BJ (cell line): ENCODE measurements at regions of chr5 and their contacts with region 1.

Region 1: DNA sequence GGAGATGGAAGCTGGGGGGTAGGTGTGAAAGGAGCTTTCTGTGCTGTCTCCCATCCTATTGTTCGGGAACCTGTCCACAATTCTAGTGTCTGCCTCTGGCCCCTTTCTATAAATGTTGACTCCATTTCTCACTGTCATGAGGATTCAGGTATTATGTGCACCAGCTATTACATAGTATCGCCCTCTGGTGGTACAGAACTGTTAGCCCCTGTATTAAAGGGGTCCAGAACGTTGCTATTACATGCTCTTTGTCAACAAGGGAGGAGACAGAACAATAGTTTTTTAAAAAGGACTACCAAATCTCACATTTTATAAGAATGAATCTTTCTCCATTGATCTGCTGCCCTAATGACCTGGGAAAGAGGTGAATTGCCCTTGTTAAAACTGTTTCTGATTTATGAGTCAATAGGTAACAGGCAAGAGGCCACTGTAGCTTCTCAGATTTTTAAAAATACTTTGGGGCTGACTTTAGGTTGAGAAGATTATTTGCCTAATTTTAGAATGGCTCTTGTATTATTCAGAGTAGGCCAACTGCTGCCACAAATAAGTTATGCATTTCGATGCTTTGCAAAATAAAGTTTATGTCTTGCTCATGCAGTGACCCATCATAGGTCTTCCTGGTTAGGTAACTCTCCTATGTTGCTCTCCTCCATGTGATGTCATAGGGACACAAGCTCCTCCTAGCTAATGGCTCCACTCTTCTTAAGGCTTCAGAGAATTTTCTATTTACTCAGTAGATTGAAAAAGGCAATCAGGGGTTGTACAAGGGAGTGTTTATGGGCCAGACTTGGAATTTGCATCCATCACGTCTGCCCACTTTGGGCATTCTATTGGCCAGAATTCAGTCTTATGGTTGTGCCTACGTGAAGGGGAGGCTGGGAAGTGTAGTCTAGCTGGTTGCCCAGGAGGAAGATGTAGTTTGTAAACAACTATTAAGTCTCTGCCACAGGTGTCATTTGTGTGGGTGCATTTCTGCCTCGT is 20.8 kb downstream of the DCANP1 start:
- DNase-seq: no peak
- H3K4me3 ChIP-seq: no peak overlapping the region
- H3K27me3 ChIP-seq: no peaks in the 10 kb centered on the region
- CTCF ChIP-seq: peak; percentile 86

Region 2: GRCh38 chr5:134833340-134834032 is 592.9 kb before region 1 on chr5:
- CTCF ChIA-PET with region 1: no interaction called
- POLR2A ChIA-PET with region 1: no interaction called
- DNase-seq: no peak
- H3K4me3 ChIP-seq: no peak overlapping the region
- H3K27me3 ChIP-seq: no peaks in the 10 kb centered on the region
- CTCF ChIP-seq: no peak

Region 3: GRCh38 chr5:135332519-135333150 is 93.8 kb before region 1 on chr5:
- CTCF ChIA-PET with region 1: interaction called, 13 read pairs
- POLR2A ChIA-PET with region 1: no interaction called
- DNase-seq: no peak
- H3K4me3 ChIP-seq: no peak overlapping the region
- H3K27me3 ChIP-seq: no peaks in the 10 kb centered on the region
- CTCF ChIP-seq: peak; percentile 63

Region 4: GRCh38 chr5:135356522-135357318 is 69.7 kb before region 1 on chr5:
- CTCF ChIA-PET with region 1: interaction called, 17 read pairs
- POLR2A ChIA-PET with region 1: no interaction called
- DNase-seq: no peak
- H3K4me3 ChIP-seq: no peak overlapping the region
- H3K27me3 ChIP-seq: no peaks in the 10 kb centered on the region
- CTCF ChIP-seq: no peak

Region 5: GRCh38 chr5:135410348-135410747 is 16.0 kb before region 1 on chr5:
- CTCF ChIA-PET with region 1: interaction called, 11 read pairs
- POLR2A ChIA-PET with region 1: no interaction called
- DNase-seq: no peak
- H3K4me3 ChIP-seq: no peak overlapping the region
- H3K27me3 ChIP-seq: no peaks in the 10 kb centered on the region; the same call in 1 of the 2 replicates
- CTCF ChIP-seq: no peak

Region 6: DNA sequence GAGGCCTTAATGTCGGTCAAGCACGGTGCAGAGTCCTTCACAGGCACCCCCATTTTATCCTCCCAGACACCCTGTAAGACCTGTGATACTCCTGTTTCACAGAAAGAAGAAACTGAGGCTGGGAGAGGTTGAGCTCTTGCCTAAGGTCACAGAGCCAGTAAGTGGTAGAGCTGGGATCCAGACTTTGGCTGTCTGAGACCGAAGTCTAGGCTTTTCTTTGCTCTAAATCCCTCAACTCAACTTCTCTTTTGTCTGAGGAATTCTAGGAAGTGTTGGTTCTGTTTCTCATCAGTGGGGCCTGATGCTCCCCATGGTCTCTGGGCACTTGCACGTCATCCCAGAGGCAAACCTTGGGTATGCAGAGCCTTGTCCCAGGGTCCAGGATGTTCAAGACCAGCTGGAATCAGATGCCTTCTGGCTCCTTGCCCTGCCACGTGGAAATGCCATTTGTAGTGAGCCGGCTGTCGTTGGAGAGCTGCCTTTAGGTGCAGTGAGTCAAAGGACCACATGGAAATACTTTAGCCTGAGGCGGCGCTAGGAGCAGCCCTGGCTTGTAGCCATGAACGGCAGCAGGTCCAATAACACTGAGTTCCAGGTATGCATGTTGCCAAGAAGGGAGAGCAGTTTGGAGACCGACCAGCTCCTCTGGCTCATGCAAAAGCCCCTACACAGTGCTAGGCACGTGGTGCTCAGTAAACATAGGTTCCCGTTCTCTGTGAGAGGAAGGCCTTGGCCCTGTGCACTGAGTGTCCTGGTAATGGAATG is 11.6 kb after region 1 on chr5:
- CTCF ChIA-PET with region 1: interaction called, 60 read pairs
- POLR2A ChIA-PET with region 1: no interaction called
- DNase-seq: peak; percentile 78
- H3K4me3 ChIP-seq: no peak overlapping the region
- H3K27me3 ChIP-seq: no peaks in the 10 kb centered on the region
- CTCF ChIP-seq: peak; percentile 28

Region 7: DNA sequence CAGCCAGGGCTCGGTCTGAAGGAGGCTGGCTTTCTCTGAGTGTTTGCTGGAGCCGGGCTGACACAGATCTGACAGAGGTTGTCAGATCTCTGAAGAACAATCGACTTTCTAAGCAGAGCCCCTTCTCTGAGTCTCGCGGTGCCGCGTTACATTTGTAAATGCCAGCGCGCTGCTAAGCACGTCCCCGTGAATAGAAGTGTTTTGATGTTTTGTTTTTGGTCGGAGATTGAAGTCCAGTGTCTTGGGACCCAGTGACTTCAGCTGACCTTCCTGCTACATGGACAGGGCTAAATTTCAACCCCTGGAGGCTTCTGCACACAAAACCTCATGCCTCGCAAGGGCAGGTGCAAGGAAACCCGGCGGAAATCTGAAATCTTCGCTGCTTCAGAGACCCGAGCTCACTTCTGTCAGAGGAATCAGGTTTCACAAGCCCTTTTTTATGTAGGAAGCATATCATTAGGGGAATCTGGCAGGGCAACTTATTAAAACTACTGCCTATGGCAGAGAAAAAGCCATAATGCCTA is 82.2 kb after region 1 on chr5:
- CTCF ChIA-PET with region 1: no interaction called
- POLR2A ChIA-PET with region 1: no interaction called
- DNase-seq: no peak
- H3K4me3 ChIP-seq: no peak overlapping the region
- H3K27me3 ChIP-seq: peaks cover 18% of the 10 kb centered on the region
- CTCF ChIP-seq: no peak

Region 8: DNA sequence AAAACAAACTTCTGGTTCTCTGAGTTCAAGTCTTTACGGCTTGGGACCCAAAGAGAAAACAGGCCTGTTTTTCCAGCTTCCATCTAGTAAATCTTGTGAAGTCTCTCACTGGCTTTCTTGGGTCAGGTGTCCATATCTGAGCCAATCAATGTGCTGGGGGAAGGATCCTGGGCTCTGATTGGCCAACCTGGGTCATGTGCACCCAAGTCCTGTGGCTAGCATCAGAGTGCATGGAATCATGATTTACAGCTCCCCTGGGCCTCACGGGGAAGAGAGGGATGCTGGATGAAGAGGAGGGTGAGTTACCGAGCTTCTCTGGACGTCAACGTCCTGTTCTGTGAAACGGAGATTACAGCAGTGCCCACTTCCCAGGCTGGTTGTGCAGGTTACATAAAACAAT is 133.0 kb after region 1 on chr5:
- CTCF ChIA-PET with region 1: no interaction called
- POLR2A ChIA-PET with region 1: no interaction called
- DNase-seq: no peak
- H3K4me3 ChIP-seq: no peak overlapping the region
- H3K27me3 ChIP-seq: peaks cover 4% of the 10 kb centered on the region; the same call in 1 of the 2 replicates
- CTCF ChIP-seq: no peak